Common myeloid progenitor, CD34-positive (primary cell): ENCODE measurements at regions of chr10 and their contacts with region 1.

Region 1: DNA sequence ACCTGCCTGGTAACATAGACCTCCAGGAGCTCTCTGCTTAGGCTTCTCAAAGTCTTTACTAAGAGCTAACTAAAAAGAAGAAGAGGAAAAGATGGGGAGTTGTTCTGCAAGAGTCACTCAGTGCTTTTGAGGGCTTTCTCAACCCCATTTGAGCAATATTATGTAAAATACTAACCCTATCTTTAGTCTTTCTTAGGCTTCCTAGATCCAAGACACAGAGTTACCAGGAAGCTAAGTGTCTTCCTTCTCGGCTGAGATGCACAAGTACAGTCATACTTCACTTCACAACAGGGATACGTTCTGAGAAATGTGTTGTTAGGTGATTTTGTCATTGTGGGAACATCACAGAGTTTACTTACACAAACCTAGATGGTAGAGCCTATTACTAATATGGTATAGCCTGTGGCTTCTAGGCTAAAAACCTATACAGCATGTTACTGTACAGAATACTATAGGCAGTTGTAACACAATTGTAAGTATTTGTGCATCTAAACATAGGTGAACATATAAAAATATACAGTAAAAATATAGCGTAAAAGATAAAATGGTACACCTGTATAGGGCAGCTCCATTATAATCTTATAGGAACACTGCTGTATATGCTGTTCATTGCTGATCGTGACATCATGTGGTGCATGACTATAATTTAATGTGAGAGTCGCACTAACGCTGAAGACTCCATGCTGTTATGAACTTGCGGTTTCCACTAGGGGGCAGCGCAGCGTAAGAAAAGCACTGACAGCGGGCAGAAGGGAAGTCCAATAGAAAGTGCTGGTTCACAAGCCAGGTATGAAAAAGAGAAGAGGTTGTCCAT is 16.3 kb downstream of the ANKRD22 start:
- DNase-seq: peak; percentile 93 to 96 (median 94)
- H3K4me3 ChIP-seq: no peak overlapping the region
- H3K27ac ChIP-seq: no peak overlapping the region
- H3K4me1 ChIP-seq: peaks cover 13 to 38% (median 26%) of the 10 kb centered on the region in 4 experiments
- H3K27me3 ChIP-seq: no peaks in the 10 kb centered on the region

Region 2: DNA sequence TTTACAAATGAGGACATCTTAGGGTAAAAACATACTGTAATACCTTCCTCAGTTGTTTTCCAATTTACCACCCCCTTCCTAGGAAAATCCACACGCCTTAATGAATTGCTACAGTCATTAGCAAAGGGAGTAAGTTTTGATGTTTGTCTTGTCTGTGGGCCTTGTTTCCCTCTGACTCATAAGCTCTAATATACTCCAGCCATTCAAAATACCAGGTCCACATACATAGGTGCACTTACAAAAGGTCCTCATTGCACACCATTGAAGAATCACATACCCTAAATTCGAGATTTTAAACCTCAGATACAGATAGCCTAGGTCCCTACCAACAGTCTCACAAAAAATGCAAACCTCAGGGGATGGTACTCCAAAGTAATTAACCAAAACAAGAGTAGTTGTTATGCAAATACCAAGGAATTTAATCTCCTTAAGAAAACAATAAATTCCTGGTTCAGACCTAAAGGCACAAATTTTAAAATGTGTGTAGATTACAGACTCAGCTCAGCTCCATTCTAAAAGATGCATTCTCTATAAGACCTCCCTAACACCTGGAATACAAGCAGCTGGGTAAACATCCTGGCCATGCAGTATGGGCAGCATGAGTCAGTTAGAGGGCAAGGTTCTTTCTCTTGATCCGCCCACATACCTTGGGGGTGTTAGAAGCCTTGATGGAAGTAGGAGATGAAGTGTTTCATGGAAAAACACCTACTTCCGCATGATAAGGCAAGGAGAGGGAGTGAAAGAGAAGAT is 132.3 kb before region 1 on chr10:
- CTCF ChIA-PET with region 1: no interaction called
- POLR2A ChIA-PET with region 1: no interaction called
- DNase-seq: no peak
- H3K4me3 ChIP-seq: no peak overlapping the region
- H3K27ac ChIP-seq: no peak overlapping the region
- H3K4me1 ChIP-seq: no peaks in the 10 kb centered on the region
- H3K27me3 ChIP-seq: no peaks in the 10 kb centered on the region

Region 3: DNA sequence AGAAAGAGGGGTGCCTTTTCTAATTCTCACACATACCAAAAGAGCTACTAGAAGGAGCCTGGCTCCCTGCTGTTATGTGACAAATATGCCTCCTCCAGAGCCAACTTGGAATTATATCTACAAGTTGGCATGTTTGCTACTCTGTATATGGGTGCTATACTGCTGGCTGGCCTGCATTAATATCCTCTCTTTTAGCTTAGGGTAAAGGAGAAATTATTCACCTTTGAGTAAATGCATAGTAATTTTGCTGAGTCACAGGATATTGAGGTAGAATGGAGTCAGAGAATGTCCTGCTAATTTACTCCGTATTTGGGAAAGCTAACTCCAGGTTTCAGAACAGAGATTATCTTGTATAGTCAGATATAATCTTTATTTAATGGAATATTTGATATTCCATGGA is 99.6 kb before region 1 on chr10:
- CTCF ChIA-PET with region 1: no interaction called
- POLR2A ChIA-PET with region 1: no interaction called
- DNase-seq: peak in 2 of 3 donors; percentile 9 to 26
- H3K4me3 ChIP-seq: no peak overlapping the region
- H3K27ac ChIP-seq: no peak overlapping the region
- H3K4me1 ChIP-seq: peaks cover 0 to 15% (median 7%) of the 10 kb centered on the region in 4 experiments
- H3K27me3 ChIP-seq: no peaks in the 10 kb centered on the region

Region 4: GRCh38 chr10:88851706-88852105 is 16.4 kb after region 1 on chr10 and contains the start of gene ANKRD22:
- CTCF ChIA-PET with region 1: interaction called, 42 read pairs
- POLR2A ChIA-PET with region 1: no interaction called
- DNase-seq: peak in 2 of 3 donors; percentile 45 to 52
- H3K4me3 ChIP-seq: peak within 1 kb of the TSS in 3 of 7 experiments; percentile 5 to 28 (median 13)
- H3K27ac ChIP-seq: no peak within 1 kb of the TSS
- H3K4me1 ChIP-seq: peaks cover 19 to 44% (median 26%) of the 10 kb centered on the region in 4 experiments
- H3K27me3 ChIP-seq: no peaks in the 10 kb centered on the region

Region 5: DNA sequence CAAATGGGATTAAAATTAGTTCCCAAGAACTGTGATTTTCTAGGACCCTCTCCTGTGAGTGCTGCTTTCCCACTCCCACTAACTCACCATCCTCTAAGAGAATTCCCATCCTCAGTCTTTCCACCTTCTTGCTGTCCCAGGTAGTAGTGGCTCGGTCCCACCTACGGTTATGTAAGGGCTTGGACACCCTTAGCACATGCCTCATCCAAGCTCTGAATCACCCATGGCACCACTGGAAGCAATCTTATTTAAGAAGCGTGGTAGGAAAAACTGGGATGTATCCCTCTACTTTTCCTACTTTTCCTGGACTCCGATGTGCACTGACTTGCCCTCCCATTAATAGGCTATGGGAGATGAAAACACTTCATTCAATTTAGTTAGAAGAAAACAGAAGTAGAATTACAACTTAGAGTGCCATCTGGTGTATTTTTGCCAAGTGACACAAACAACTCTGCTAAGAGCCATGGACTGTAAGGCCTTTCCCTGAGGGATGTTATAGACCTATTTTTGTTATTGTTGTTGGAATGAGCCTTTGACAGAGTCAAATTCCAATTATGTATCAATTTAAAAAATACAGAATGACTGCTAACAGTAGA is 30.1 kb after region 1 on chr10:
- CTCF ChIA-PET with region 1: interaction called, 70 read pairs
- POLR2A ChIA-PET with region 1: interaction called, 3 read pairs
- DNase-seq: peak; percentile 56 to 75 (median 69)
- H3K4me3 ChIP-seq: no peak overlapping the region
- H3K27ac ChIP-seq: no peak overlapping the region
- H3K4me1 ChIP-seq: peaks cover 0 to 8% (median 2%) of the 10 kb centered on the region in 4 experiments
- H3K27me3 ChIP-seq: no peaks in the 10 kb centered on the region

Region 6: DNA sequence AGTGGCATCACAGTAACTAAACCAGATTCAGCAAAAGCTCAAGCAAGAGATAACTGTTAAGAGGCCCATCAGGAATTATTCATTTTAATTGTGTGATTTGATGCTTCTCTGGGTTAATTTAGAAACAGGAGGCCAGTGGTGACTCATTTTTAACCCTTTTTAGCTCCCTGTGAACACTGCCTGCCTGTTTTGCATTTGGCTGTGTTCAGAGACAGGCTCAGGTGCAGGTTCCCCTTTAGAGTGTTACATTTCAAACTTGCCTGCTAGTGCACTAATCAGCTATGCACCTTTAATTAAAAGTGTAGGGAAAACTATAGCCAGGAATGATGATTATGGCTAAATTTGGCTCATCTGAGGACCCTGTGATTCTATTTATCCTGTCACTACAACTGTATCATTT is 51.3 kb after region 1 on chr10:
- CTCF ChIA-PET with region 1: interaction called, 16 read pairs
- POLR2A ChIA-PET with region 1: no interaction called
- DNase-seq: peak in 2 of 3 donors; percentile 43 to 50
- H3K4me3 ChIP-seq: no peak overlapping the region
- H3K27ac ChIP-seq: no peak overlapping the region
- H3K4me1 ChIP-seq: peaks cover 8 to 17% (median 15%) of the 10 kb centered on the region in 4 experiments
- H3K27me3 ChIP-seq: no peaks in the 10 kb centered on the region